GM10248 (cell line): ENCODE measurements at regions of chr11 and their contacts with region 1.

Region 1: GRCh38 chr11:72091005-72091691 is 10.5 kb downstream of the LRRC51 start:
- DNase-seq: peak; percentile 78
- CTCF ChIP-seq: peak; percentile 79

Region 2: GRCh38 chr11:72040726-72041441 is 50.3 kb before region 1 on chr11:
- CTCF ChIA-PET with region 1: interaction called, 72 read pairs
- POLR2A ChIA-PET with region 1: no interaction called
- DNase-seq: peak; percentile 65
- CTCF ChIP-seq: no peak

Region 3: GRCh38 chr11:72058416-72059034 is 32.6 kb before region 1 on chr11:
- CTCF ChIA-PET with region 1: interaction called, 23 read pairs
- POLR2A ChIA-PET with region 1: no interaction called
- DNase-seq: no peak
- CTCF ChIP-seq: no peak

Region 4: GRCh38 chr11:72080975-72081644 is 10.0 kb before region 1 on chr11:
- CTCF ChIA-PET with region 1: interaction called, 52 read pairs
- POLR2A ChIA-PET with region 1: no interaction called
- DNase-seq: no peak
- CTCF ChIP-seq: no peak

Region 5: GRCh38 chr11:72123117-72123653 is 32.0 kb after region 1 on chr11:
- CTCF ChIA-PET with region 1: no interaction called
- POLR2A ChIA-PET with region 1: no interaction called
- DNase-seq: no peak
- CTCF ChIP-seq: no peak